Dendritic cell treated with granulocyte-macrophage colony-stimulating factor and Interleukin-4, amounts not matched to agents 40 ng/mL and 50 ng/mL, for 4 days (primary cell): ENCODE measurements at regions of chr1 and their contacts with region 1.

Region 1: DNA sequence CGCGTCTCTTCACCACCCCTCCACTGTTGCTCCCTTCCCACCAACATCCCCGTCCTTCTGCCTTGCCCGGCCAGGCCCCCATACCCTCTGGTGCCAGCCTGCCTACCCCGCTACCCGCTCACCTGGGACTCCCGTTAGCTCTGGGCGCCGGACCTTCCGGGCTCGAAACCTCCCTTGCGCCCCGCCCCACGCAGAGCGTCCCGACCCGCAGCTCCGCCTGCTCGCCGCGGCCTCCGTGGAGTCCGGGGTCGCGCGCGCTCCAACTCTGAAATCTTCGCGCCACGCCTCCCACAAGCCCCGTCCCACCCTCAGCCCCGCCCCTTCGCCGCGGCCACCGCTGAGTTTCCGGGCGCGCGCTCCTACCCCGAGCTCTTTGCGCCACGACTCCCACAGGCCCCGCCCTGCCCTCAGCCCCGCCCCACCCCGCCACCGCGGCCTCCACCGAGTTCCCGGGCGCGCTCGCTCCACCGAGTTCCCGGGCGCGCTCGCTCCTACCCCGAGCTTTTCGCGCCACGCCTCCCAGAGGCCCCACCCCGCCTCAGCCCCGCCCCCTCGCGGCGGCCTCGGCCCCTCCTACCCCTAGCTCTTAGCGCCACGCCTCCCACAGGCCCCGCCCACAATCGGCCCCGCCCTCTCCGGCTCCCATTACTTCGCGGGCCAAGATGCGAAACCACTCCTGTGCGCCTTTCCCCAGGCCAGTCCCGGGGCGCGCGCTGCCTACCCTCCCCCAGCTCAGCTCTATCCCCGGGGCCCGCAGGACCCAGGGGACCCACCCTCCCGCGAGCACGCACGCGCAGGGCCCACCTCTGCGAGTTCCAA is at the start of gene IFT25:
- H3K4me3 Mint-ChIP-seq: peak within 1 kb of the TSS; percentile 95
- H3K27ac Mint-ChIP-seq: peak within 1 kb of the TSS; percentile 88
- H3K4me1 Mint-ChIP-seq: peaks cover 39% of the 10 kb centered on the region
- H3K27me3 Mint-ChIP-seq: no peaks in the 10 kb centered on the region

Region 2: GRCh38 chr1:53837924-53838652 is 107.6 kb before region 1 on chr1 and contains the start of gene NDC1:
- intact Hi-C with region 1: loop called (anchors 1 kb)
- H3K4me3 Mint-ChIP-seq: peak within 1 kb of the TSS; percentile 98
- H3K27ac Mint-ChIP-seq: peak within 1 kb of the TSS; percentile 100
- H3K4me1 Mint-ChIP-seq: peaks cover 8% of the 10 kb centered on the region
- H3K27me3 Mint-ChIP-seq: no peaks in the 10 kb centered on the region

Region 3: GRCh38 chr1:53860967-53861411 is 84.7 kb before region 1 on chr1:
- intact Hi-C with region 1: loop called (anchors 2 kb)
- H3K4me3 Mint-ChIP-seq: no peak overlapping the region
- H3K27ac Mint-ChIP-seq: no peak overlapping the region
- H3K4me1 Mint-ChIP-seq: no peaks in the 10 kb centered on the region
- H3K27me3 Mint-ChIP-seq: no peaks in the 10 kb centered on the region

Region 4: DNA sequence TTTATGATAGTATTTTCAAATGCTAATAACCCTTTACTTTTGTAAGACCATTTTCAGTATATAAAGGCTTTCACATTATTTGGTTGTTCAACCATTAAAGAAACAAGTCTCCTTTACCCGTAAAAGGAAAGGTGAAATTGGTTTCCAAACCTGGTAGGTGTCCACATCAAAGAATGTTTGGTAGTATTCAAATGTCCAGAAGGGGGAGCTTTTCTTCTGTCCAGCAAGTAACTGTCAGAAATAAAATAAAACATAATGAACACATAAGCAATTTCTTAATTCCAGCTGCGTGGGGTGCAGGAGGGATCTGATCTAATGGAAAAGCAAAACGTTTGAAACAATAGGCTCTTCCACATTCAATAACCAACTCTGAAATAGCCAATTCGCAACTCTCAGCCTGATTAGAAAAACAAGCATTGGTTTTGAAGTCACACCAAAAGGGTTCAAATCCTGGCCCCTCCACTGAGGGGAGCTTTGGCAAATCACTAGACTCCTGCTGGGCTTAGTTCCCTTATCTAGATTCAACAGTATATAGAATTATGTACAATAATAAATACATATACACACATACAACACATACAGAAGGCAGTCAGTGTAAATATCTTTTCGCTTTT is 67.0 kb before region 1 on chr1:
- intact Hi-C with region 1: loop called (anchors 1 kb)
- H3K4me3 Mint-ChIP-seq: no peak overlapping the region
- H3K27ac Mint-ChIP-seq: no peak overlapping the region
- H3K4me1 Mint-ChIP-seq: no peaks in the 10 kb centered on the region
- H3K27me3 Mint-ChIP-seq: no peaks in the 10 kb centered on the region

Region 5: GRCh38 chr1:53889304-53890298 is 56.0 kb before region 1 on chr1 and contains the start of gene YIPF1:
- intact Hi-C with region 1: loop called (anchors 1 kb)
- H3K4me3 Mint-ChIP-seq: peak within 1 kb of the TSS; percentile 99
- H3K27ac Mint-ChIP-seq: peak within 1 kb of the TSS; percentile 96
- H3K4me1 Mint-ChIP-seq: peaks cover 70% of the 10 kb centered on the region
- H3K27me3 Mint-ChIP-seq: no peaks in the 10 kb centered on the region

Region 6: DNA sequence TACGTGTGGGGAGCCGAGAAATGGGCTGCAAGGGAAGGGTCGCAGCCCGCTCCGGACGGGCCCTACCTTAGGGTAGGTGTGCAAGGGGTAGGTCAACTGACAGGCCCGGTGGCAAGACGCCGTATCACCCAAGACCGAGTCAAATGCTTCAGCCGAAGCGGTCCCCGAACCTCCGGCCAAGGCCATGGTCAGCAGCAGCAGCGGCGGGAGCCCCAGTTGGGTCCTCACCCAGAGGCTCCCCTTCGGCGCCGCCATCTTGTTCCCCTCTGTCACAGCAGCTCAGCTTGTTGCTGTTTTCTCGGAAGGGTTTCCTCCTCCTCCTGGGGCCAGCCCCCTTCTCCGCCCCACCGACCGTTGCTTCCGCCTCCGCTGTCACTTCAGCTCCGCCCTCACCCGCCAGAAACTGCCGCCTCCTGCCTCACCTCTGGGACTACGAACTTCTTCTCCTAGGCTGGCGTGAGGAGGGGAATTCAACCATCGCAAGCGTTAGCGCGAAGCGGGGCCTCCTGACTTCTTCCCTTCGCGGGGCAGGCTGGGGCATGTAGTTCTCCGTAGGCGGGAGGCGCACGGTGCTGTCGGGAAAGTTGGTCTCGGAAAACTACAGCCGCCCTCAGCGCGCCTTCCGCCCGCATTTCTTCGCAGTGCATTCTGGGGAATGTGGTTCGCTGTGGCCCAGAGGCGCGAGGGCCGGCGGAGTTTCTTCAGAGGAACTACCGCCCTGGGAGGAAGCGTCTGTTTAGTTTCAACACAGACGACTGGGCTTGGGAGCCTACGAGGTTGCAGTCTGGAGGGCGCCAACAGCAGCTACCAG is 107.5 kb after region 1 on chr1 and contains the starts of genes TCEANC2 and TMEM59:
- intact Hi-C with region 1: loop called (anchors 1 kb)
- H3K4me3 Mint-ChIP-seq: no peak within 1 kb of the TSS
- H3K27ac Mint-ChIP-seq: no peak within 1 kb of the TSS
- H3K4me1 Mint-ChIP-seq: peaks cover 40% of the 10 kb centered on the region
- H3K27me3 Mint-ChIP-seq: no peaks in the 10 kb centered on the region

Region 7: DNA sequence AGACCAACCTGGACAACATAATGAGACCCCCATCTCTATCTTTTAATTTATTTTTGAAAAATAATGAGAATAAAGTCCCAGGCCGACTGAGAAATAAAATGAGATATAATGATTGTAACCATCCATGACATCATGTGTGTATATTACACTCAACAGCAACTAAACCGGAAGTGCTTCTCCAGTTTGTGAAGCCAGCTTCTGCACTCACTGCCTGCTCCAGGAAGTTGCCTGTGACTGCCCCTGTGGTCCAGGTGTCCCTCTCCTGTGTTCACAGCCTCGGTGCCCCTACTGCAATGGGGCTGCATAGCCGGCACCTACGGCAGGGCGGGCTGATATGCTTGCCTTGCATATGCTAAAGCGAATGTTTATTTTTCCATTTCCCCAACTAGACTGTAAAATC is 392.3 kb after region 1 on chr1:
- intact Hi-C with region 1: no loop called
- H3K4me3 Mint-ChIP-seq: no peak overlapping the region
- H3K27ac Mint-ChIP-seq: no peak overlapping the region
- H3K4me1 Mint-ChIP-seq: peaks cover 49% of the 10 kb centered on the region
- H3K27me3 Mint-ChIP-seq: no peaks in the 10 kb centered on the region

Region 8: DNA sequence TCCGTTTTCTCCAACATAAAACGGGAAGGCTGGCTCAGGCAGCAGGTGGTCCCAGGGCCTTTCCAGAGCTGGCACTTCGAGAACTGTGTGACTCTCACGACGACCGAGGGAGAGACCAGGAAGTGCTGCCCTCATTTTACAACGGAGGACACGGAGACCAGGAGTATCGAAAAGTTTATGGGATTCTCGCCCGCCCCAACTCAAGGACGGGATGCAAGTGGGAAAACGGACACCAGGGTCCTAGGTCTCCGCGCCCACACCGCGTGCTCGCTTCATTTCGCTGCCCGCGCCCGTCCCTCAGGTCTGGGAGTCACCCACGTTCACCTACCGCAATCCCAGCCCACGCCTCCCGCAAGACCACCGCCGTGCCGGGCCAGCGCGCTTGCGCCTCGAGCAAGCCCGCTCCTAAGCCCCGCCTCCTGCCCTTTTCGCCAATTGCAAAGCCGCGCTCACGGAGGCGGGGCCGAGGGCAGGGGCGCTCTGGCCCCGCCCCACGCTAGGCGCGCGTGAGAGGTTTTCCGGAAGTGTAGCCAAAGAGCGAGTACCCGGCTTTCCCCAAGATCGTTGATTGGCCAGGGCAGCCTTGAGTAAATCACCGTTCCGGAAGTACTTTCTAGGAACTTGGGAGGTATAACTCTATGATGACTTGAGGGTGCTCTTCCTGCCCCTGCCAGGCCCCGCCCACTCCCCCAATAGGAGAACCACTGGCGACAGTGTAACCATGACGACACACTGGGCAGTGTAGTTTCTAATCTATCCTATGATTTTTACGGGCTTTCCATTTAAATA is 818.7 kb after region 1 on chr1 and contains the start of gene PARS2:
- intact Hi-C with region 1: loop called (anchors 10 kb)
- H3K4me3 Mint-ChIP-seq: peak within 1 kb of the TSS; percentile 97
- H3K27ac Mint-ChIP-seq: peak within 1 kb of the TSS; percentile 90
- H3K4me1 Mint-ChIP-seq: peaks cover 17% of the 10 kb centered on the region
- H3K27me3 Mint-ChIP-seq: peaks cover 2% of the 10 kb centered on the region